ENCODE measurements at regions of chr4 and their contacts with region 1.

Region 1: GRCh38 chr4:56544573-56545131 is 39.1 kb downstream of the ARL9 start:
- DNase-seq: peak; percentile 63
- H3K4me3 ChIP-seq: peak overlapping the region; percentile 58
- H3K27ac ChIP-seq: no peak overlapping the region
- H3K27me3 ChIP-seq: peaks cover 7% of the 10 kb centered on the region
- CTCF ChIP-seq: peak; percentile 96

Region 2: DNA sequence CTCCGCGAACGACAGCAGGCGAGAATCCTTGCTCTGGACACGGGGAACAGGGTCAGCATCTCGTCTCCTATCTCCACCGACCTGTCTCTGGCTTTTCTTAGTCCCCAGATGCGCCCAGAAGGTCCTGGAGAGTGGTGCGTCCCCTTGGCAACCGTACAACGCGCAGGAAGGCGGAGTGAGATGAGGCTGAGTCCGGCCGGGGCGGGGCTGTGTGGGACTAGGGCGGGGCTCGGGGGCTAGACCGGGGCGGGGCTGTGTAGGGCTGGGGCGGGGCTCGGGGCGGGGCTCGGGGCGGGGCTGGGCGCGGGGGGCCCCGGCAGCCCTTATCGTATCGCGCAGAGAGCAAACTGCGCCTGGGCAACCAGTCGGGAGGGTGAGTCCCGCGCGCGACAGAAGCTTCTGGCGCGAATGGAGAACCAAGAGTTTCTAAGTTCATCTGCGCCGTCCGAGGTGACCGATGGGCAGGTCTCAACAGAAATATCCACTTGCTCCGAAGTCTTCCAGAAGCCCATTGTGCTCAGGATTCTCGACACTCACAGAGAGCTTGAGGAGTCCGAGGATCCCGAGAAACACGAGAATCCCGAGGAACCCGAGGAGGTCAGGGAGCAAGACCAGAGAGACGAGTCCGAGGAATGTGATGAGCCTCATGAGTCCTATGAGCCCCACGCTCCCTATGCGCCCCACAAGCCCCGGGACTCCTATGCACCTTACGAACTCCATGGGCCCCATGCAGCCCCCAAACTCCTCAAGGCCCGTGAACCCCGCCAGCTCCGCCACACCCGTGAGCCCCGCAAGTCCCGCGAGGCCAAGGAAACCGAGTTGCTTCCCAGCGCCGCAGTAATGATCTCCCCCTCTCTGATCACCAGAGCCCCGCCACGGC is 14.1 kb before region 1 on chr4:
- CTCF ChIA-PET with region 1: interaction called, 16 read pairs
- POLR2A ChIA-PET with region 1: interaction called, 4 read pairs
- DNase-seq: peak; percentile 27
- H3K4me3 ChIP-seq: peak overlapping the region; percentile 67
- H3K27ac ChIP-seq: no peak overlapping the region
- H3K27me3 ChIP-seq: peaks cover 16% of the 10 kb centered on the region
- CTCF ChIP-seq: no peak

Region 3: DNA sequence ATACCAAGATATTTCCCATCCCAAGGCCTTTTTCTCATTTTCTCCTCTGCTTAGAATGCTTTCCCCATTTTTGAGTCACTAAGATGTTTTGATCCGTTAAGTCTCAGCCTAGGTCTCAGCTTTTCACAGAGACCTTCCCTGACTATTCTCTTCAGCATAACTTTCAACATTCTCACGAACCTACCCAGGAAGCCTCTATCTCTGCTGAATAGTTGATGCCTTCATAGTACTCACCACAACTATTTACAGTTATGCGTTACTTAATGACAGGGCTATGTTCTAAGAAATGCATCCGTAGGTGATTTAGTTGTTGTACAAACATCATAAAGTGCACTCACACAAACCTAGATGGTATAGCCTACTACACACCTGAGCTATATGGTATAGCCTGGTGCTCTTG is 25.4 kb after region 1 on chr4:
- CTCF ChIA-PET with region 1: interaction called, 10 read pairs
- POLR2A ChIA-PET with region 1: no interaction called
- DNase-seq: no peak
- H3K4me3 ChIP-seq: no peak overlapping the region
- H3K27ac ChIP-seq: no peak overlapping the region
- H3K27me3 ChIP-seq: no peaks in the 10 kb centered on the region
- CTCF ChIP-seq: no peak

Region 4: GRCh38 chr4:56799824-56800756 is 255.4 kb after region 1 on chr4:
- CTCF ChIA-PET with region 1: interaction called, 23 read pairs
- POLR2A ChIA-PET with region 1: no interaction called
- DNase-seq: peak; percentile 67
- H3K4me3 ChIP-seq: peak overlapping the region; percentile 71
- H3K27ac ChIP-seq: peak overlapping the region; percentile 57
- H3K27me3 ChIP-seq: peaks cover 3% of the 10 kb centered on the region
- CTCF ChIP-seq: peak; percentile 99

Region 5: DNA sequence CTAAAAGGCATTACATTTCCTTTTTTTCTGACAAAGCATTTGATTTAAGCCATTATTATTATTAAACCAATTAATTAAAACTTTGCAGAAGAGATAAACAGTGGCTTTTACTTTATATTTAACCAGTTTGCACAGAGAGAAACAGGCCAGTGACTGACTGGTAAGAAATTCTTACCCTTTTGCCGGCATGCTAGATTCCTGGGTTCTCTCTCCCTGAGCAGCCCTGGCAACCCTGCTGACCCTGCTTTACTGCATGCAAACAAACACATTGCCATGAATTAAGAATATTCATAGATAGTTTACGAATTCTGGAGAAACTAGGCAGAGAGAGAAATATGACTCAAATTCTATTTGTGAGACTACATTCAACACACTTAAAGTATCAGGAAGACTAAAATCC is 1947.0 kb after region 1 on chr4:
- CTCF ChIA-PET with region 1: no interaction called
- POLR2A ChIA-PET with region 1: no interaction called
- DNase-seq: no peak
- H3K4me3 ChIP-seq: no peak overlapping the region
- H3K27ac ChIP-seq: no peak overlapping the region
- H3K27me3 ChIP-seq: no peaks in the 10 kb centered on the region
- CTCF ChIP-seq: no peak

Measured in AG04450 (cell line).